PC-3 (cell line): ENCODE measurements at regions of chr3 and their contacts with region 1.

Region 1: DNA sequence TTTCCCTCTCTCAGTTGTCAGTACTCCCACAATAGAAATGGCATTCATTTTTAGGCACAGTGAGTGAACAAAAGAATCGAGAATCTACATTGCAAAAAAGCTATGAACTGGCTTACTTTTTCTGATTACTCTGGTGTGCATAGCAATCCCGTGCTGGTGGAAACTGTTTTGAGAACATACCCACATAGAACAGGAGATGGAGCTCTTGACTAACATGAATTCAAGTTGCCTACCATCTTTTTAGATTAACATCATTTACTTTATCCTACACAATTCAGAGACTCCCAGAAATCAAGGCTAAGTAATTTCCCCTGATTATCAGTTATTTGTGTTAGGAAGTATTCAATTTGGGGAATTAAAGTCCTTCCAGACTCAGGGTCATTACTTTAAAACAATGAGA is 326.6 kb downstream of the ARPP21 start:
- DNase-seq: peak; percentile 75
- ATAC-seq: peak; percentile 86
- H3K4me3 ChIP-seq: no peak overlapping the region
- H3K27ac ChIP-seq: no peak overlapping the region
- H3K4me1 ChIP-seq: peaks cover 3% of the 10 kb centered on the region; the same call in 1 of the 2 replicates
- H3K27me3 ChIP-seq: no peaks in the 10 kb centered on the region
- CTCF ChIP-seq: peak; percentile 87

Region 2: GRCh38 chr3:36060950-36061349 is 95.0 kb after region 1 on chr3:
- CTCF ChIA-PET with region 1: no interaction called
- POLR2A ChIA-PET with region 1: no interaction called
- intact Hi-C with region 1: loop called (anchors 5 kb)
- DNase-seq: peak; percentile 88
- ATAC-seq: peak; percentile 47
- H3K4me3 ChIP-seq: no peak overlapping the region
- H3K27ac ChIP-seq: peak overlapping the region; percentile 73
- H3K4me1 ChIP-seq: peaks cover 52% of the 10 kb centered on the region
- H3K27me3 ChIP-seq: no peaks in the 10 kb centered on the region
- CTCF ChIP-seq: no peak

Region 3: DNA sequence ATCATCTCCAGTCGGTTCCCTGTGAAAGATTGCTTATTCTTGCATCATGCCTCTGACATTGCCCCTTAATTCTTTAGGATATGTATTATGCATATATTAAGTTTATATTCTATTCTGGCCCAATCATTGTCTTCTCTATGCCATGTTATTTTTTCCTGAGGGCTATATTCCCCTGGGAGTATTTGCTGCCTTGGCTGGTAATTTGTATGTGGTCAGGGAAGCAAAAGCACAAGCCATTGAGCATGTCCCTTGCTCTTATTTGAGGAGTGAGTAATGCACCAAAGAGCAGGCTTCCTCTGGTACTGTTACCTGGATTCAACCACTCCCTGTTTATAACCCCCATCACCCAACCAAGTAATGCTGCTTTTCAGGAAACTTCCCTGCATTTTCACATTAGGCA is 450.7 kb after region 1 on chr3:
- CTCF ChIA-PET with region 1: no interaction called
- POLR2A ChIA-PET with region 1: no interaction called
- intact Hi-C with region 1: loop called (anchors 10 kb)
- DNase-seq: peak; percentile 82
- ATAC-seq: peak; percentile 97
- H3K4me3 ChIP-seq: peak overlapping the region; percentile 33; the same call in 1 of the 2 replicates
- H3K27ac ChIP-seq: peak overlapping the region; percentile 87
- H3K4me1 ChIP-seq: peaks cover 27% of the 10 kb centered on the region
- H3K27me3 ChIP-seq: no peaks in the 10 kb centered on the region
- CTCF ChIP-seq: no peak

Region 4: DNA sequence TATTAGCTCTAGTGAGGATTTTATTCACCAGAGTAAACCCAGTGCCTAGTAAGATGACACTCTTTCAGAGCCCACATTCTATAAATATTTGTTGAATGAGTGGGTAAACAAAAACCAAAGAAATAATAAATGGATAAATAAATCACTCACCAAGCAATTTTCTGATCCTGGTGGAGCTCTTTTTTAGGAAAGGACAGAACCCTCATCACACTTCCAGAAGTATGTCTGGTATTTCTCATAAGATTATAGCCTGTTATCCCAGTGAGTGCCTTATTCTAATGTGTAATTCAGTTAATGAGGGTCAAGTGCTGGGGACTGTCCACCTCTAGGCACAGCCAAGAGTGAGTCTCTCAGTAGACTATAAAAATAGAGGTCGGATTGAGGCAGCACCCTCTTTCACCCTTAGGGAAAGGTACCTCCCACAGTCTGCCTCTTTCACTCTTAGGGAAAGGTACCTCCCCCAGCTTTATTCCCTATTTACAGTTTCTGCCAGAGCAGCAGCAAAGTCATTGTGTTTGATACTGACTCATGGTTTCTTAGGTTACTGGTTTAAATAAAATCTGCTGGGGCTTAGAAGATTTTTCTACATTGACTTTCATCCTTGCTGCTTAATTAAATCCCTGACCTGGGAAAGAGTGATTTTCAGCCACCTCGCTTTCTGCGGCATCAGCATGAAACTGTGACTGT is 559.4 kb after region 1 on chr3:
- CTCF ChIA-PET with region 1: interaction called, 5 read pairs
- POLR2A ChIA-PET with region 1: no interaction called
- intact Hi-C with region 1: loop called (anchors 5 kb)
- DNase-seq: peak; percentile 80
- ATAC-seq: peak; percentile 97
- H3K4me3 ChIP-seq: peak overlapping the region; percentile 37
- H3K27ac ChIP-seq: peak overlapping the region; percentile 85
- H3K4me1 ChIP-seq: peaks cover 15% of the 10 kb centered on the region
- H3K27me3 ChIP-seq: no peaks in the 10 kb centered on the region
- CTCF ChIP-seq: no peak

Region 5: DNA sequence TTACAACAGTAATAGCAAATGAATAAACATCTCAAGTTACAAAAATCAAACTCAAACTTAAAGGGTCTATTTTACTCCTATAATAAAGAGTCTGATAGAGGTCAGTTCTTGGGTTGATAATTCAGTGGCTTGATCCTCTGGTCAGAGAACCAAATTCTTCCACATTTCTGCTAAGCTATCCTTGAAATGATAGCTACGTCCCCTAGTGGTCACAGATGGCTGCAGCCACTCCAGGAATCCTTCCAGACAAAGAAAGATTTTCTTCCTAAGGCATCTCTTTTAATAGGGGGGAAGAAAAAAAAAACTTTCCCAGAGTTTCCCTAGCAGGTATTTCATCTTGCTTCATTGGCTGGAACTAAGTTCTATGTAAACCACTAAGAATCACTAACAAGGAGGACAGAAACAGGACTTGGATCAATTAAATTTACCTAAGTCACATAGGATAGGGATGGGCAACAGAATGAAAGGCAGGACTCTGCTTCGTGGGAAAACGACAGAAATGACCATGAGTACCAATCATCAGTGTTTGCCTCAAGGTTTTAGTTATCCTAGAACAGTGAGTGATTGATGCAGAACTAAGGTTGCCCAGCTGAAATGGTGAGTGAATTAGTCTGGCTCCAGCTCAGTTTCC is 575.1 kb after region 1 on chr3:
- CTCF ChIA-PET with region 1: interaction called, 8 read pairs
- POLR2A ChIA-PET with region 1: no interaction called
- intact Hi-C with region 1: loop called (anchors 1 kb)
- DNase-seq: peak; percentile 71
- ATAC-seq: peak; percentile 78
- H3K4me3 ChIP-seq: no peak overlapping the region
- H3K27ac ChIP-seq: no peak overlapping the region
- H3K4me1 ChIP-seq: no peaks in the 10 kb centered on the region
- H3K27me3 ChIP-seq: no peaks in the 10 kb centered on the region
- CTCF ChIP-seq: peak; percentile 96

Region 6: GRCh38 chr3:36591959-36592358 is 626.1 kb after region 1 on chr3:
- CTCF ChIA-PET with region 1: no interaction called
- POLR2A ChIA-PET with region 1: no interaction called
- intact Hi-C with region 1: loop called (anchors 5 kb)
- DNase-seq: peak; percentile 44
- ATAC-seq: peak; percentile 70
- H3K4me3 ChIP-seq: no peak overlapping the region
- H3K27ac ChIP-seq: no peak overlapping the region
- H3K4me1 ChIP-seq: 0 out of 2 replicates have a peak, but pooled peaks cover under 1% of the 10 kb centered on the region
- H3K27me3 ChIP-seq: no peaks in the 10 kb centered on the region
- CTCF ChIP-seq: peak; percentile 62

Region 7: DNA sequence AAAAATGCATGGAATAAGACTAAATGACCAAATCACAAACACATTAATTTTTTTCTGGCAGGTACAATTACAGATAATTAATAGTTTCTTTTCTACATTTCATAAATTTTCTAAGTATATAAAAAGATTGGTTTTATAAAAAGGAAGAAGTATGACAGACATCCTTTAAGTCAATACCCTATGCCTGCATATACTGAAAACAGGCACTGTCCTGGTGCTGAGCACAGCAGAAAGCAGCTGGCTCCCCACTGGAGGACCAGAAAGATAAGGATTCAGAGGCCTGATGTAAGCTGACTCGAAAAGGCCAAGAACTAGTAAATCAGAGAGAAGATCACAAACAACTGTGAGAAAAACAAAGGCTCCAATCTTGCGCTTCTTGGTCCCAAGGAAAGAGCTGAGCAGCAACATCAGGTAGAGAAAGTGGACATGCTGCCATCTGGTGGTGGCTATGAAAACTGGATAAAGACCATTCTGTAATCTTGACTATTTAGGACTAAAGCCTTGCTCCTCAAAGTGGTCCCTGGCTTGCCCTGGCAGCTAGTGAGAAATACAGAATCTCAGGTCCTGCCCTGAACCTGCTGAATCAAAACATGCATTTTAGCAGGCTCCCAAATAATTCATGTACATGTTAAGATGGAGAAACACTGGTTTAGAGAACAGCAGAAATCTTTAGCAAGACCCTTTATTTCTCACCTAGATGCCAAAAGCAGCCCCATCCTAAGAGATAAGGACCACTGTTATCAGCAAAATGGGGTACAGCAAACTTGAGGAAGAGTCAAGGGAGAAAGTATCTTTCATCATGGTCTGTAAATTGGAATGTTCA is 902.9 kb after region 1 on chr3:
- CTCF ChIA-PET with region 1: no interaction called
- POLR2A ChIA-PET with region 1: no interaction called
- intact Hi-C with region 1: loop called (anchors 2 kb)
- DNase-seq: peak; percentile 73
- ATAC-seq: peak; percentile 79
- H3K4me3 ChIP-seq: no peak overlapping the region
- H3K27ac ChIP-seq: no peak overlapping the region
- H3K4me1 ChIP-seq: no peaks in the 10 kb centered on the region
- H3K27me3 ChIP-seq: no peaks in the 10 kb centered on the region
- CTCF ChIP-seq: peak; percentile 86